ENCODE measurements at regions of chr12 and their contacts with region 1.

Region 1: DNA sequence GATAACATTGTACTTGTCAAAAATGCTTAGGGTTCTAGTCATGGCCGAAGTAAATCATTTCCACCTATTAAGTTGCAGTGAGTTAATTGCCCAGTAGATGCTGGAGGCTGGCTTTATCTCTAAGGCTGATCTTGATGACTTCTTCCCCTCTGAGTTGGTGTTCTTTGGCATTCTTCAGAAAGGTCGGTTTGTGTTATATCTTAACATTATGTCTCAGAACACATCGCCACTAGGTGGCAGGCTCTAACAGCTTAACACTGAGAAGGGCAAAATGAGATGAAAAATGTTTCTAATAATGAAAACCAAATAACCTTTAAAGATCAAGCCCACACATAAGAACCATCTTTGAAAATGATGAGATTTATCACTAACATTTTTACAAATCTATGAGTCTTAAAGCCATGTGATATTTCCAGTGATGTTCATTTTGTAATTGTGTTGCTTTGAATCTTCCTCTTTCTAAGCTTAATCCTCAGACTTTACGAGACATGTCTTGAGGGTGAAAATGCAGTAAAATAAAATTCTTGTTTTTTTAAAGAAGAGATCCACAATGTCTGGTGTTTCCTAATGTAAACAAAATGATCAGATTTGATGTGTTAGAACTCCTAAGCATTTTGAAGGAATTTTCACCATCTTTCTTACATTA is 28.6 kb downstream of the SUDS3 start:
- DNase-seq: peak; percentile 85
- ATAC-seq: peak; percentile 83
- H3K4me3 ChIP-seq: no peak overlapping the region
- H3K27ac ChIP-seq: no peak overlapping the region
- H3K4me1 ChIP-seq: no peaks in the 10 kb centered on the region
- H3K27me3 ChIP-seq: no peaks in the 10 kb centered on the region
- CTCF ChIP-seq: peak; percentile 97

Region 2: DNA sequence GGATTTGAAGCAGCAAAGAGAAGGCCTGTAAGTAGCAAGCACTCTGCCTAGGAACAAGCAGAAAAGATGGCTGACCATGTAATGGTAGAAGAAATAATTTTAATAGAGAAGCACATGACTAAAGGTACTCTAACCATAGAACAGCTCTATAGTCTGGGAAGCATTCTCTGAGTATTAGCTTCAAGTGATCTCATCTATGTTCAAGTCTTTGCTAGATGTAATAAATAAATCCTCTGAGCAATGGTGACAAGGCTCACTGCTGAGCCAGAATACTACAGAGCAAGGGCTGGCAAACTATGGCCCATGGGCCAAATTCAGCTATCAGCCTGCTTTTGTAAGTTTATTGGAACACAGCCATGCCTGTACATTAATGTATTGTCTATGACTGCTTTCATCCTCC is 184.3 kb before region 1 on chr12:
- CTCF ChIA-PET with region 1: interaction called, 17 read pairs
- POLR2A ChIA-PET with region 1: no interaction called
- intact Hi-C with region 1: no loop called
- DNase-seq: no peak
- ATAC-seq: no peak
- H3K4me3 ChIP-seq: no peak overlapping the region
- H3K27ac ChIP-seq: no peak overlapping the region
- H3K4me1 ChIP-seq: no peaks in the 10 kb centered on the region
- H3K27me3 ChIP-seq: no peaks in the 10 kb centered on the region
- CTCF ChIP-seq: no peak

Region 3: DNA sequence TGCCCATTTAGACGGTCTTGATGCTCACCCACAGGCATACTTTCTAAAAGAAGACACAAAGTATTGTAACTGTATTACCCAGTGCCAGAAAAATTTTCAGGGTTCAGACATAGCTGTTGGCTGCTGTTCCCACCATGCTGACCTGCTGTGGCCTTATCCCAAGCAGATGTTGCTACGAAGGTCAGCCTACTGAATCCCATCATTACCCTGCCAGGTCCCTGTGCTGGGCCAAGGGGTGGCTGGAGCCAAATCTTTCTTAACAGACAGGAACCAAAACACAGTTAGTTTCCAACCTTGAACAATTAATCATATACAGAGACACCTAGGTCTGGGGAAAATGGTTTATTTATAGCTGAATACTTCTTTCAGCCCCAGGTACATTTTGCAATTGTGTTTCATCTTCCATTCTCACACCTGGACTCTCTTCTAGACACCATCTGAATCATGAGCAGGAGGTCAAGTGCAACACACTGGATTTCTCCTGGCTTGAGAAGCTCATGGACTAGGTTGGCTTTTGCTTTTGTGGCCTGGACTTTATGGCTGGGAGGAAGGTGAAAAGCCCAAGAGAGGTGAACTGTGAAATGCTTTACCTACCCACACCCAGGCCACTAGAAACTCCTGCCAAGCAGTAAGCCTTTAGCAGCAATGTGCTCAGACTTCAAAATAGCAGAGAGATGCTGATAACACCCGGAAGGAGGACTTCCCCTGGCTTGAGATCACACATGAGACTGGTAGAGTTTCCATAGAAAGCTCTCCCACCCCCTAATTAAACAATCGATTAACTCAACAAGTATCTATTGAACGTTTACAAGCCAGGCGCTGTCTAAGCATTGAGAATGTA is 121.5 kb after region 1 on chr12:
- CTCF ChIA-PET with region 1: no interaction called
- POLR2A ChIA-PET with region 1: no interaction called
- intact Hi-C with region 1: no loop called
- DNase-seq: no peak
- ATAC-seq: no peak
- H3K4me3 ChIP-seq: no peak overlapping the region
- H3K27ac ChIP-seq: no peak overlapping the region
- H3K4me1 ChIP-seq: no peaks in the 10 kb centered on the region
- H3K27me3 ChIP-seq: peaks cover 66% of the 10 kb centered on the region
- CTCF ChIP-seq: no peak

Region 4: DNA sequence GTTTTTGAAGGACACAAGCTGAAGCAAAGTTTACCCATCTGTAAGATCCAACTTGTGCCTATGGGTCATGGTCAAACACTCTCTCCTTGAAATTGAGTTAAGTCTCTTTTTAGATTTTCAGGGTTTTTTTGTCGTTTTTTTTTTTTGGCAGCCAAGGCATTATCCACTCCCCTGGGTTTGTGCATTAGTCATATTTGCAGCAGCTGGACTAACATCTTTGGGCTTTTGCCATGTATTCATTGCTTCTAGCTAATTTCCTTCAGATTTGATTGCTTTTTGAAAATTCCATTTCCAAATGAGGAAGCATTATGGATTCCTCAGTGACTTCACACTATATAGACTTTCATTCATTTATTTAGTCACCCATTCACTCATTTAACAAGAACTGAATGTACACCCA is 496.0 kb after region 1 on chr12:
- CTCF ChIA-PET with region 1: no interaction called
- POLR2A ChIA-PET with region 1: no interaction called
- intact Hi-C with region 1: no loop called
- DNase-seq: no peak
- ATAC-seq: no peak
- H3K4me3 ChIP-seq: no peak overlapping the region
- H3K27ac ChIP-seq: no peak overlapping the region
- H3K4me1 ChIP-seq: no peaks in the 10 kb centered on the region
- H3K27me3 ChIP-seq: peaks cover 26% of the 10 kb centered on the region; the same call in 1 of the 2 replicates
- CTCF ChIP-seq: no peak

Region 5: DNA sequence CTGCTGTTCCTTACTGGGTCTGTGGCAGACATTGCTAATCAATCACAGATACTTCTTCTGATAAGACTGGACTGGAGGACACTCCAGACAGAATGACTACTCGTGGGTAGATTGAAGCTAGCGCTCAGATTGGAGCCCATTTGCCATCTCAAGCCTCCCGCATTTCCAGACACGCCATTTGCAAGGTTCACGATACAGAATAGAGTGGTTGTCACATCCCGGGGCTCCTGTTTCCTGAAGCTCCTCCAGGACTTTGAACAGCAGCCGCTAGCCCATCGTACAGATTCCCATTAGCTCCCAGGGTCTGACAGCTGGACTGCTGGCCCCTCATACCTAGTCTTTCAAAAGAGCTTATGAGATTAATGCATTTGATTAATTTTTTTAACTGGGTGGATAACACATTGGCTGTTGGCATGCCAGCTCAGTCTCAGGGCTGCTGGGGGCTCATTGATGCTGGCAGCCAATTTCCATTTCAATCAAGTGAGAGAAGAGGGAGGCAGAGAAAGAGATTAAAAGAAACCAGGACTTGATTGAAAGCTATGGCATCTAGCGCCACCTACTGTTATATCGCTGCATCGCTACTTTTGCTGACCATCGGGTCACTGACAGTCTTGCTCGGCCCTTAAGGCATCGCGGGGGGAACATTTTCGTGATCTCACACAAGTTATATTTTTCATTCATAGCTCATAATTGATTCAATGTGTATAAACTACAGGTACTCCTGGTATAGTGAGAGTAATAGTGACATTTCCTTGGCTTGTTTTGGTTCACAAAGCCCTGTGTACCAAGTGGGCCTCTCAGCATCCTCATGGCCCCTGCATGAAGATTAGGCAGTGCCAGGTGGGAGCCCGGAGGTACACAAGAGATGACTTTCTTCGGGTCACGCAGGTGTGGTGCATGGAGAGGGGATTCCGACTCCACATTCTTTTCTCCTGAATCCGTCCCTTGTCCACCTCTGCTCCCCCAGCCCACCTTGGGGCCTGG is 1008.1 kb after region 1 on chr12:
- CTCF ChIA-PET with region 1: no interaction called
- POLR2A ChIA-PET with region 1: no interaction called
- intact Hi-C with region 1: loop called (anchors 1 kb)
- DNase-seq: peak; percentile 74
- ATAC-seq: peak; percentile 49
- H3K4me3 ChIP-seq: no peak overlapping the region
- H3K27ac ChIP-seq: no peak overlapping the region
- H3K4me1 ChIP-seq: no peaks in the 10 kb centered on the region
- H3K27me3 ChIP-seq: peaks cover 52% of the 10 kb centered on the region
- CTCF ChIP-seq: peak; percentile 90

Region 6: GRCh38 chr12:119544765-119545625 is 1140.0 kb after region 1 on chr12:
- CTCF ChIA-PET with region 1: no interaction called
- POLR2A ChIA-PET with region 1: no interaction called
- intact Hi-C with region 1: loop called (anchors 1 kb)
- DNase-seq: peak; percentile 85
- ATAC-seq: peak; percentile 94
- H3K4me3 ChIP-seq: no peak overlapping the region
- H3K27ac ChIP-seq: no peak overlapping the region
- H3K4me1 ChIP-seq: no peaks in the 10 kb centered on the region
- H3K27me3 ChIP-seq: peaks cover 26% of the 10 kb centered on the region
- CTCF ChIP-seq: peak; percentile 93

Region 7: GRCh38 chr12:119659289-119659897 is 1254.4 kb after region 1 on chr12:
- CTCF ChIA-PET with region 1: no interaction called
- POLR2A ChIA-PET with region 1: no interaction called
- intact Hi-C with region 1: loop called (anchors 10 kb)
- DNase-seq: peak; percentile 71
- ATAC-seq: peak; percentile 45
- H3K4me3 ChIP-seq: no peak overlapping the region
- H3K27ac ChIP-seq: no peak overlapping the region
- H3K4me1 ChIP-seq: no peaks in the 10 kb centered on the region
- H3K27me3 ChIP-seq: 0 out of 2 replicates have a peak, but pooled peaks cover 5% of the 10 kb centered on the region
- CTCF ChIP-seq: peak; percentile 88